Calu3 (cell line): ENCODE measurements at regions of chr5 and their contacts with region 1.

Region 1: GRCh38 chr5:115634343-115635132 is 8.7 kb upstream of the TMED7 start:
- DNase-seq: peak; percentile 91
- H3K4me3 Mint-ChIP-seq: peak overlapping the region; percentile 36
- H3K27ac Mint-ChIP-seq: peak overlapping the region; percentile 68
- H3K4me1 Mint-ChIP-seq: no peaks in the 10 kb centered on the region
- H3K27me3 Mint-ChIP-seq: no peaks in the 10 kb centered on the region
- CTCF ChIP-seq: peak; percentile 86

Region 2: DNA sequence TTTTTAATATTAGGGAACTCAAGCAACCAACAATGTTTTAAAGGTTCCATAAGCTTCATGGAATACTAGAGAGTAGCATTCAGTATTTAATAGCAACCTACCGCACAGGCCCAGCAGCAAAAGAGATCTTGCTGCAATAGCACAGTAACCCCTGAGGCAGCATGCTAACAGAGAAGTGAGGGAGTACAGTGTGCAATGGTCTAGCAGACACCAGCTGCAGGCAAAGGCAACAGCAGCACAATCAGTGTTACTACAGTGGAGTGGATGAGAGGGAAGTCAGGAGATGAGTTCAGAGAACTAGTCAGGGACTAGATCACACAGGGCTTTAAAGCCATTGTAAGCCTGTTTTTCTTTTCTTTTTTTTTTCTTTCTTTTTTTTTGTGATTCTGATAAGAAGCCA is 35.0 kb before region 1 on chr5:
- CTCF ChIA-PET with region 1: no interaction called
- intact Hi-C with region 1: no loop called
- DNase-seq: no peak
- H3K4me3 Mint-ChIP-seq: no peak overlapping the region
- H3K27ac Mint-ChIP-seq: no peak overlapping the region
- H3K4me1 Mint-ChIP-seq: peaks cover 23% of the 10 kb centered on the region
- H3K27me3 Mint-ChIP-seq: no peaks in the 10 kb centered on the region
- CTCF ChIP-seq: no peak

Region 3: GRCh38 chr5:115831163-115831768 is 196.7 kb after region 1 on chr5:
- CTCF ChIA-PET with region 1: interaction called, 6 read pairs
- intact Hi-C with region 1: loop called (anchors 1 kb)
- DNase-seq: peak; percentile 46
- H3K4me3 Mint-ChIP-seq: no peak overlapping the region
- H3K27ac Mint-ChIP-seq: no peak overlapping the region
- H3K4me1 Mint-ChIP-seq: peaks cover 26% of the 10 kb centered on the region
- H3K27me3 Mint-ChIP-seq: no peaks in the 10 kb centered on the region
- CTCF ChIP-seq: peak; percentile 70

Region 4: GRCh38 chr5:115888027-115888426 is 253.5 kb after region 1 on chr5:
- CTCF ChIA-PET with region 1: interaction called, 3 read pairs
- intact Hi-C with region 1: loop called (anchors 5 kb)
- DNase-seq: no peak
- H3K4me3 Mint-ChIP-seq: no peak overlapping the region
- H3K27ac Mint-ChIP-seq: no peak overlapping the region
- H3K4me1 Mint-ChIP-seq: peaks cover 6% of the 10 kb centered on the region
- H3K27me3 Mint-ChIP-seq: no peaks in the 10 kb centered on the region
- CTCF ChIP-seq: peak; percentile 15

Region 5: DNA sequence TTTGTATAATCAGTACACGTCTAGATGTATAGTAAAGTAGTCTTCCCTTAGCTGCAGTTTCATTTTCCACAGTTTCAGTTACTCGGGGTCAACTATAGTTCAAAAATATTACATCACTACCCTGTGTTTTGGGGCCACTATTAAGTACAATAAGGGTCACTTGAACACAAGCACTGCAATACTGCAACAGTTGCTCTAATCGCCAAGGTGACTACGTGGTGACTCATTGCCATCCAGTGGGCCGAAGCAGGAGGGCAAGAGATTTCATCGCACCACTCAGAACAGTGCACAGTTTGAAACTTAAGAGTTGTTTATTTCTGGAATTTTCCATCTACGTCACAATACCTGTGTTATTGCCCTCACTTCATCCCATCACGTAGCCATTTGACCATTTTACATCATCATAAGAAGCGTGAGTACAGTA is 397.6 kb after region 1 on chr5 and contains the start of gene ARL14EPL:
- CTCF ChIA-PET with region 1: no interaction called
- intact Hi-C with region 1: loop called (anchors 1 kb)
- DNase-seq: peak; percentile 83
- H3K4me3 Mint-ChIP-seq: no peak within 1 kb of the TSS
- H3K27ac Mint-ChIP-seq: peak within 1 kb of the TSS; percentile 55
- H3K4me1 Mint-ChIP-seq: no peaks in the 10 kb centered on the region
- H3K27me3 Mint-ChIP-seq: no peaks in the 10 kb centered on the region
- CTCF ChIP-seq: no peak
- total RNA-seq, gene ARL14EPL: 0.66 and 1.2 TPM in 2 replicates

Region 6: GRCh38 chr5:116068028-116068632 is 433.6 kb after region 1 on chr5:
- CTCF ChIA-PET with region 1: no interaction called
- intact Hi-C with region 1: loop called (anchors 1 kb)
- DNase-seq: peak; percentile 44
- H3K4me3 Mint-ChIP-seq: no peak overlapping the region
- H3K27ac Mint-ChIP-seq: no peak overlapping the region
- H3K4me1 Mint-ChIP-seq: no peaks in the 10 kb centered on the region
- H3K27me3 Mint-ChIP-seq: no peaks in the 10 kb centered on the region
- CTCF ChIP-seq: peak; percentile 67